Left ventricle myocardium inferior (tissue), 1 donor: ENCODE measurements at regions of chr11 and their contacts with region 1.

Region 1: DNA sequence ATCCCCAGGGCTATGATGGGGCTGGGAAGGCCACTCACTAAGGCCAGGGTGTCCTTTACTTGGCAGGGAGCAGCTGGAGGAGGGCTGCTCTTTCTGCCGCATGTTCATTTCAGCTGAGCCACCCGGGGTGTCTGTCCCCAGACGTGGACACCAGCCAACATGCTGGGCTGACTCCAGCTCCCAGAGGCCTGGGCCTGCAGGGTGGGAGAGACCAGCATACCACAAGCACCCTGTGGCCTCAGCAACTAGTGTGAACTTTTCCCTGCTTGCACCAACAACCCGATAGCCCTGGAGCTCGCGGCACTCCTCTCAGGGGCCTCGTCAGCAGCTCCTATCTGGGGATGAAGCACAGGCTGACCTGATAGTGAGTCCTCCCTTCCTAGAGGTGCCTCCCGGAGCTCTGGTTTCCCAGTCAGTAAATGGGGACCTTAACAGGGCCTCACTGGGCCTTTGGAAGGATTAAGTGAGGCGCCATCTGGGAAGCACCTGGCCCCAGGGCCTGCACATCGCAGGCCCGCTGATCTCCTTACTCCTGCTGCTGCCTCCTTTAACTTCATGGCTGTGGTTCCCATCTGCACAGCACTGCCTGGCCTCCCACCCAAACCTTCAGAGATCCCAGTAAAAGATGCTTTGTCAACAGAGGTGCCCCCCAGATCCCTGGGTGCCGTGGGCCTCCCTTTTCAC is 83.4 kb downstream of the GALNT18 start:
- DNase-seq: peak; percentile 81
- H3K4me3 ChIP-seq: peak overlapping the region; percentile 0
- H3K27ac ChIP-seq: peak overlapping the region; percentile 88
- H3K4me1 ChIP-seq: peaks cover 99% of the 10 kb centered on the region
- H3K27me3 ChIP-seq: no peaks in the 10 kb centered on the region
- CTCF ChIP-seq: no peak

Region 2: GRCh38 chr11:11569936-11570491 is 31.6 kb after region 1 on chr11:
- intact Hi-C with region 1: no loop called
- DNase-seq: peak; percentile 75
- H3K4me3 ChIP-seq: peak overlapping the region; percentile 30
- H3K27ac ChIP-seq: peak overlapping the region; percentile 80
- H3K4me1 ChIP-seq: peaks cover 84% of the 10 kb centered on the region
- H3K27me3 ChIP-seq: no peaks in the 10 kb centered on the region
- CTCF ChIP-seq: peak; percentile 38

Region 3: DNA sequence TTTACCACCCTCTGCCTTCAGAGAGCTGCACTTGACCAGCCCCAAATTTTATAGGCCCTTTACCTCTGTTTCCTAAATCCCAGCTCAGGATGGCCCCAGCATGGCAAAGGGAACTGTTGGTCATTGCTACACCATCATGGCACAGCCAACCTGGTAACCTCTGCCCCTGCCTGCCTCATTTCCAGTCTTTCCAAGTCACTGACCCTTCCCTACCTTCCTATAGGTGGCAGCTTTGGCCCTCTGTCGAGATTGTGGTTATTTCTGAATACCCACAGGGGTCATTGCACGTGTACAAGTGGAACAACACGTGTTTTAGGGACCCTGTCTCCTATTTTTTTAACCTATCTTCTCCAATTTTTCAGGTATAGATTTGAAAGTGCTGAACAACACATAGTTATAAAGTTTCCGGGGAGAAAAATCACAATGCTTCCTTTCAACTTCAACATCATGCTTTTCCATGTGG is 80.6 kb after region 1 on chr11:
- intact Hi-C with region 1: loop called (anchors 10 kb)
- DNase-seq: no peak
- H3K4me3 ChIP-seq: peak overlapping the region; percentile 94
- H3K27ac ChIP-seq: peak overlapping the region; percentile 83
- H3K4me1 ChIP-seq: peaks cover 88% of the 10 kb centered on the region
- H3K27me3 ChIP-seq: no peaks in the 10 kb centered on the region
- CTCF ChIP-seq: peak; percentile 39